ENCODE measurements at regions of chr16 and their contacts with region 1.

Region 1: GRCh38 chr16:82936941-82937551 is 310.3 kb downstream of the CDH13 start:
- DNase-seq: no peak
- H3K4me3 ChIP-seq: no peak overlapping the region
- H3K27ac ChIP-seq: no peak overlapping the region
- H3K4me1 ChIP-seq: no peaks in the 10 kb centered on the region
- H3K27me3 ChIP-seq: no peaks in the 10 kb centered on the region
- CTCF ChIP-seq: no peak
- EP300 ChIP-seq: no peak
- POLR2A ChIP-seq: no peak

Region 2: DNA sequence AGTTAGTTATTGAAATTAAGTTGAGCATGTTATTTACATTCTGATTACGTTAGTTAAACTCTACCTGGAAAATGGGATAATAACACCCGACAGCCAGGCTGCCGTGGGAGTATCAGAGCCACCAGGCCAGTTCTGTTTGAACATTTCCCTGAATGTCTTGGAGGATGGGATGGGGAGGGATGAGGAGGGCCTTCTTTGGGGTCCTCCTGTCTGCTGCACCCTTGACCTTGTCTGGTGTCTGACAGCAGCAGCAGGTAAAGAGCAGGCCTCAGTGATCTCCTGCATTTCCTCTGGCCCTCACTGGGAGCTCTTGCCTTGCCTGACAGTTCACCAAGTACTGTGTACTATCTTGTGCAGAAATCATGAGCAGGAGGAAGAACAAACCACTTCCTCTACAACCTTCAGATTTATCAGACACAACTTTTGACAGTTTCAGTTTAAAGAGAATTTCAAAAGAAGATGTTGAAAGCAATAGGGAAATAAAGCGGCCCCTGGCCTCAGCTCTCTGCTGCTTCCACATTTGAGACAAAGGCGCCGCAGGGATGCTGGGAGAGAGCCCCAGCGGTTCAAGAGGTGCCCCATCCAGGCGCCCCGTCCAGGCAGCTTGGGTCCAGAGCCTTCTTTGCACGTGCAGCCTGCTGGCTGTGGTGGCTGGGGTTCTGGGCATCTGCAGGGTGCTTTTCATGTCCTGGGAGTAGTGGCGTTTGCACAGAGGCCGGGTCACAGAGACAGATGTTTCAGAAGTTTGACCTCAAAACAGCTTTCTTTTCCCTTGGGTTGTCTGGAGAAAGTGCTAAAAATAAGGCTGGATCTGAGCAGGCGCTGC is 1467.1 kb before region 1 on chr16:
- in situ Hi-C with region 1: no loop called
- intact Hi-C with region 1: loop called (anchors 10 kb)
- DNase-seq: no peak
- H3K4me3 ChIP-seq: peak overlapping the region in 1 of 4 donors; percentile 7
- H3K27ac ChIP-seq: peak overlapping the region; percentile 54 to 77 (median 64)
- H3K4me1 ChIP-seq: peaks cover 3 to 63% (median 18%) of the 10 kb centered on the region in 4 donors
- H3K27me3 ChIP-seq: no peaks in the 10 kb centered on the region
- CTCF ChIP-seq: no peak
- EP300 ChIP-seq: no peak
- POLR2A ChIP-seq: no peak

Region 3: GRCh38 chr16:83023640-83024039 is 86.6 kb after region 1 on chr16:
- in situ Hi-C with region 1: no loop called
- intact Hi-C with region 1: no loop called
- DNase-seq: no peak
- H3K4me3 ChIP-seq: no peak overlapping the region
- H3K27ac ChIP-seq: no peak overlapping the region
- H3K4me1 ChIP-seq: no peaks in the 10 kb centered on the region
- H3K27me3 ChIP-seq: no peaks in the 10 kb centered on the region
- CTCF ChIP-seq: no peak
- EP300 ChIP-seq: no peak
- POLR2A ChIP-seq: no peak

Region 4: GRCh38 chr16:83233153-83233552 is 296.1 kb after region 1 on chr16:
- in situ Hi-C with region 1: no loop called
- intact Hi-C with region 1: no loop called
- DNase-seq: no peak
- H3K4me3 ChIP-seq: no peak overlapping the region
- H3K27ac ChIP-seq: no peak overlapping the region
- H3K4me1 ChIP-seq: no peaks in the 10 kb centered on the region
- H3K27me3 ChIP-seq: no peaks in the 10 kb centered on the region
- CTCF ChIP-seq: no peak
- EP300 ChIP-seq: no peak
- POLR2A ChIP-seq: no peak

Measured in transverse colon (tissue), 4 donors.